ENCODE measurements at regions of chr4 and their contacts with region 1.

Region 1: GRCh38 chr4:55078987-55079386 is 46.4 kb downstream of the KDR start:
- DNase-seq: peak in 1 of 2 donors; percentile 34
- ATAC-seq: peak; percentile 65 to 80
- H3K4me3 ChIP-seq: no peak overlapping the region
- H3K27ac ChIP-seq: peak overlapping the region; percentile 57 to 78 (median 72)
- H3K4me1 ChIP-seq: no peaks in the 10 kb centered on the region
- H3K27me3 ChIP-seq: no peaks in the 10 kb centered on the region
- CTCF ChIP-seq: no peak
- POLR2A ChIP-seq: peak in 1 of 2 donors; percentile 43

Region 2: GRCh38 chr4:53461244-53461643 is 1617.7 kb before region 1 on chr4:
- in situ Hi-C with region 1: no loop called
- intact Hi-C with region 1: loop called (anchors 10 kb)
- DNase-seq: no peak
- ATAC-seq: no peak
- H3K4me3 ChIP-seq: no peak overlapping the region
- H3K27ac ChIP-seq: no peak overlapping the region
- H3K4me1 ChIP-seq: no peaks in the 10 kb centered on the region
- H3K27me3 ChIP-seq: no peaks in the 10 kb centered on the region
- CTCF ChIP-seq: no peak
- POLR2A ChIP-seq: no peak